Heart right ventricle (tissue), 16 donors: ENCODE measurements at regions of chr3 and their contacts with region 1.

Region 1: GRCh38 chr3:25897019-25897418 is 107.1 kb downstream of the OXSM start:
- DNase-seq: no peak
- ATAC-seq: peak in 1 of 8 donors; percentile 50
- H3K4me3 ChIP-seq: no peak overlapping the region
- H3K27ac ChIP-seq: no peak overlapping the region
- H3K4me1 ChIP-seq: no peaks in the 10 kb centered on the region
- H3K27me3 ChIP-seq: no peaks in the 10 kb centered on the region
- CTCF ChIP-seq: peak in 5 of 9 donors; percentile 31 to 42 (median 35)

Region 2: GRCh38 chr3:25582242-25582641 is 314.8 kb before region 1 on chr3:
- intact Hi-C with region 1: no loop called
- DNase-seq: no peak
- ATAC-seq: peak in 1 of 8 donors; percentile 43
- H3K4me3 ChIP-seq: no peak overlapping the region
- H3K27ac ChIP-seq: no peak overlapping the region
- H3K4me1 ChIP-seq: peaks cover 0 to 17% (median 5%) of the 10 kb centered on the region in 9 donors
- H3K27me3 ChIP-seq: no peaks in the 10 kb centered on the region
- CTCF ChIP-seq: no peak

Region 3: DNA sequence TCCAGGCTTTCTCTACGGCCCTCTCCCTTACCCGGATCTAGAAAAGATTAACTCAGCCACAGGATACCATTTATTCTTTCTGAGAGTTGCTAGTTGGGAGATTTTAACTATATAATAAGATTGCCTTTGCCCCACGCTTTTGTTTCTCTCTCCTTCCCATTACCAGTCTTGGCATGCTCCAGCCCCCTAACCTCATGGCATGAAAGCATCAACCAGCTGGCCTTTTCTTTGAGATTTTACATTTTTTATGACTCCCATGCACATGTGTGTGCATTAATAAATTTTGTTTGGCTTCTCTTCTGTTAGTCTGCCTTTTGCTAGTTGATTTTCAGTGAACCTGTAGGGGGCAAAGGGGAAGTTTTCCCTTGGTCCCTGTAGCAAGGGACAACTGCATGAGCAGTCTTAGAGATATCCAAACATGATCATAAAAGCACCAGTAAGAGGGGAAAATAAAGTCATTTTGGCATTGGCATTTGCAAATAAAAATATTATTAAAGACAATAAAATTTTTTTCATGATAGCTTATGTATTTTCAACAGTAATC is 33.5 kb before region 1 on chr3:
- intact Hi-C with region 1: loop called in 1 of 10 experiments (anchors 1 kb)
- DNase-seq: no peak
- ATAC-seq: no peak
- H3K4me3 ChIP-seq: no peak overlapping the region
- H3K27ac ChIP-seq: no peak overlapping the region
- H3K4me1 ChIP-seq: no peaks in the 10 kb centered on the region
- H3K27me3 ChIP-seq: no peaks in the 10 kb centered on the region
- CTCF ChIP-seq: no peak